SK-N-SH (cell line): ENCODE measurements at regions of chr7 and their contacts with region 1.

Region 1: GRCh38 chr7:117750612-117751563 is 122.4 kb downstream of the CTTNBP2 start:
- DNase-seq: peak; percentile 31
- H3K4me3 ChIP-seq: no peak overlapping the region
- H3K27ac ChIP-seq: no peak overlapping the region
- H3K4me1 ChIP-seq: no peaks in the 10 kb centered on the region
- H3K27me3 ChIP-seq: no peaks in the 10 kb centered on the region; the same call in 1 of the 2 replicates
- CTCF ChIP-seq: peak; percentile 80
- EP300 ChIP-seq: no peak
- RAD21 ChIP-seq: peak; percentile 53

Region 2: DNA sequence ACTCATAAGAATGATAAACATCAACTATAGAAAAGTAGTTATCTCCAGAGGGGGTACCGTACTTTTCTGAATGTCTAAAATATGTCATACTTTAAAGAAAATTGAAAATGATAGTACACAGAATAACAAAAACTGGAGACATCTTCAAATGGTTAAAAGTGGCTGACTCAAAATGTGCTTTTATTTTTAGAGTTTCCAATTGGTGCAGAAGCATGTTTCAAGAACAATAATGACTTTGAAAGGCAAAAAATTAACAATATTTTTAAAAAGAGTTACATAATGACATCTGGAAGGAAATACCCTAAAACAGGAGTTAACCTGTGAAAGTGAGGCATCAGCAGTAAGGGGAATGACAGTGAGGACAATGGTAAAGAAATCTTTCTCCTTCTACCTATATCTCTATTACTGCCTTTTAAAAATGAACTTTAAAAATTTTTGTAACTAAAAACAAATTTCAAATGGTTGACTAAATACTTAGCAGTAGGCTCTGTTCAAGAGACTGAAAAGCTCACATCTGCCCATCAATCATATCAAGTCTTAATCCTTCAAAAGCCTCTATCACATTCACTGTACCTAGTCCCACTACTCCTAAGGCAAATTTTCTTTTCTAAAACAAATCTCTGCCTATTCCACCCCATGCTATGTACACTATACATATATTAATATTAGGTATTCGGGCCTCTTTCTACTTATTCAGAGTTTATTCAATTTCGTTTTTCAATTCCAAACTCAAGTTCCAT is 326.6 kb before region 1 on chr7:
- CTCF ChIA-PET with region 1: no interaction called
- POLR2A ChIA-PET with region 1: no interaction called
- DNase-seq: no peak
- H3K4me3 ChIP-seq: no peak overlapping the region
- H3K27ac ChIP-seq: no peak overlapping the region
- H3K4me1 ChIP-seq: no peaks in the 10 kb centered on the region
- H3K27me3 ChIP-seq: peaks cover 32% of the 10 kb centered on the region; the same call in 1 of the 2 replicates
- CTCF ChIP-seq: no peak
- EP300 ChIP-seq: no peak
- RAD21 ChIP-seq: no peak

Region 3: GRCh38 chr7:117564080-117564479 is 186.8 kb before region 1 on chr7:
- CTCF ChIA-PET with region 1: no interaction called
- POLR2A ChIA-PET with region 1: no interaction called
- DNase-seq: no peak
- H3K4me3 ChIP-seq: no peak overlapping the region
- H3K27ac ChIP-seq: no peak overlapping the region
- H3K4me1 ChIP-seq: no peaks in the 10 kb centered on the region
- H3K27me3 ChIP-seq: no peaks in the 10 kb centered on the region
- CTCF ChIP-seq: no peak
- EP300 ChIP-seq: no peak
- RAD21 ChIP-seq: no peak

Region 4: DNA sequence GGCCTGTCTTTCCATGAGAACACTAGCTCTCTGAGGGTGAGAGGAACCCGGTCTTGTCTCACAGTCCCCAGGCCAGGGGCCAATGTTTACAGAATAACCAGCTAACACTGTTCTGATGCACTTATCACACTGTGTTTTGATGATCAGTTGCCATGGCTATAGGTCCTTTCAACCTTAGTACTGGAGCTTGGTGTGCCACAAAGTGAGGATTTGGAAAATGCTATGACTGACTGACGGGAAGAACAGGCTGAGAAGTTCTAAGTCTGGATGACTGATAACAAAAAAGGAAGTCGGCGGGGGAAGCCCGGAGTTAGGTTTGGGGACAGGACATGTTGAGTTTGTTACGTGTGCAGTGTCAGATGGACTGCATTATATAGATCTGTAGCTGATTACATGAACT is 19.4 kb before region 1 on chr7:
- CTCF ChIA-PET with region 1: interaction called, 12 read pairs
- POLR2A ChIA-PET with region 1: interaction called, 3 read pairs
- DNase-seq: no peak
- H3K4me3 ChIP-seq: no peak overlapping the region
- H3K27ac ChIP-seq: no peak overlapping the region
- H3K4me1 ChIP-seq: peaks cover 0 to 4% of the 10 kb centered on the region in 2 experiments; a peak in 1 of 4 replicates
- H3K27me3 ChIP-seq: peaks cover 44% of the 10 kb centered on the region; the same call in 1 of the 2 replicates
- CTCF ChIP-seq: no peak
- EP300 ChIP-seq: no peak
- RAD21 ChIP-seq: no peak

Region 5: DNA sequence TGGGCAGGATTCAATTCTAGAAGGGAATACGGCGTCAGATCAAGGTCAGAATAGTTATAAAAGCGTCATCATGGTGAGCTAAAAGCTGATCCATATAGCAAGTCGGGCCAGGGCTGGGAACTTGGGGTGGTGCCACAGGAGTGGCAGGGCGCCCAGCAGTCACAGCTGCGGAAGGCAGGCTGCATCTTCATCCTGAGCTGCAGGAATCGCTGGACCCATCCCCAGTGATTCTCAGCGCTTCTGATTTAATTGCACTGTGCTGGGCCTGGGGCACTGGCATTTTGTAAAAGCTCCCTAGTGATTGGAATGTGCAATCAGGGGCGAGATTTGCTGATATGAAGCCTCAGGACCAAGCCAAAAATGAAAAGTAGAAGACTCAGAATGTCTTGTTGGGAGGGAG is 13.0 kb before region 1 on chr7:
- CTCF ChIA-PET with region 1: interaction called, 12 read pairs
- POLR2A ChIA-PET with region 1: no interaction called
- DNase-seq: no peak
- H3K4me3 ChIP-seq: no peak overlapping the region
- H3K27ac ChIP-seq: no peak overlapping the region
- H3K4me1 ChIP-seq: no peaks in the 10 kb centered on the region
- H3K27me3 ChIP-seq: peaks cover 40% of the 10 kb centered on the region; the same call in 1 of the 2 replicates
- CTCF ChIP-seq: no peak
- EP300 ChIP-seq: no peak
- RAD21 ChIP-seq: no peak

Region 6: DNA sequence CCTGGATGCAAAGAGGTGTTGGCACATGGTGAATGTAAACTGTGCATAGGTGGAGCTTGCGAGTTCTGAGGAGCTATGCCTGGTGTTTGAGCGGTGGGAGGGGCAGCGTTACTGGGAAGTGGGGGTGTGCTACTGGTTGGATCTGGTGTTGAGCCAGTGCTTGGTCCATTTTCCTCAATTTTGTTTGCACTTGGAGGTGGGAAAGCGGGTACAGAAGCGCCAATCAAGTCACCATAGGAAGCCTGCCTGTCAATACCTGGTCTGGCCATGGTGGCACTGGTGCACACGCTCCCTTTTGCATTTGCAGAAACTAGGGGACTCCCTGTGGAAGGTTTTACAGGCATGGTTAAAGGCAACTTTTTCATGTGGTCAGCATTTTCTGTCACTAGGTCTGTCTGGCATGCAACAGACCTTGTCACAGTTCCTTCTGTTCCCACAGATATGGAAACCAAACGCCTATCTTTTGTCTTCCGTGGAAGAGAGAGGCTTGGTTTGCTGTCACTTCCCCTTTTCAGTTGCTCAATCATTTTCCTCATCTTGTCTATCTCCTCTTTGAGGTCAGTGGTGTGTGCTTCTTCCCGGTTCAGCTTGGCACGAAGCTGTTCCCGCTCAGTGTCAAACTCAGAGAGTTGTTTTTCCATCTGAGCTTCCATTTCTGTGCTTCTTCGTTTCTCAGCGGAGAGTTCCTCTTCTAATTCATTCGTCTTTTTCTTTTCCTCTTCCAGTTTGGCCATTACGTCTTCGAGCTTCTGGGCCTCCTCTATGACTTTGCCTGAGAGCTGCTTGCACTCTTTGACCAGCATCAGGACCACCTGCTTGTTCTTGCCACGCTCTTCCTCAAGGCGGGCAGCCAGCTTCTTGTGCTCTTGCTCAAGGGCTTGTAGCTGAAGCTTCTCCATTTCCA is 41.2 kb after region 1 on chr7:
- CTCF ChIA-PET with region 1: interaction called, 11 read pairs
- POLR2A ChIA-PET with region 1: no interaction called
- DNase-seq: no peak
- H3K4me3 ChIP-seq: no peak overlapping the region
- H3K27ac ChIP-seq: no peak overlapping the region
- H3K4me1 ChIP-seq: no peaks in the 10 kb centered on the region
- H3K27me3 ChIP-seq: peaks cover 15% of the 10 kb centered on the region; the same call in 1 of the 2 replicates
- CTCF ChIP-seq: no peak
- EP300 ChIP-seq: no peak
- RAD21 ChIP-seq: no peak